ENCODE measurements at regions of chr4 and their contacts with region 1.

Region 1: DNA sequence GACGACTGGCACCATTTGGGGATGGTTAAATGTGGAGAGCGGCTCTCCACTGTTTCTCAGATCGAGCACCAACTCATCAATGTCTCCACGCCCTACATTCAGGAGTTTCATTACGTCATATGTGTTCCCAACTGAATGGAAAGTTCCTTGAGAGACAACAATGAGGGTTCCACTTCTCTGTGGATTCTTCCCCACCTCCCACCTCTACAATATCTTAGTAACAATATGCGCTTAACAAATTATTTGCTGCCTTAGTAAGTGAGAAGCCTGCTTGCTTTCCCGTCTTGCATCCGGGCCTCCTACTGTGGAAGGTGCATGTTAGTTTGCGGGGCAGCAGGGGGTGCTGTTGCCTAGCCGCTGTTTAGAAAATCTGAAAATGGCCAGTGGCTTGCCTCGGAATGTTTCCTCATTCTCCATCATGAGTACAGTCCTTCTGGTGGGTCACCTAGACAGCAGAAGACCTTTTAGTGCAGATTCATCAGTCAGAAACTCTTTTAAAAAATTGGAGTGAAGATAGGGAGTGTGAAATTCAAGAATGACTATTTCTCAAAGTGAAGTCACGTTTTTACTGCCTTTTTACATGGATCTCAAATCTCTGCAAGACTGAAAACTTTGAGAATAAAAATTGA is 55.7 kb downstream of the PHOX2B start:
- DNase-seq: peak; percentile 58
- H3K4me3 ChIP-seq: no peak overlapping the region
- H3K27ac ChIP-seq: no peak overlapping the region
- H3K4me1 ChIP-seq: no peaks in the 10 kb centered on the region
- H3K27me3 ChIP-seq: peaks cover 9 to 10% of the 10 kb centered on the region in 2 experiments
- CTCF ChIP-seq: peak; percentile 83 to 85
- POLR2A ChIP-seq: no peak

Region 2: GRCh38 chr4:41418444-41418843 is 274.4 kb before region 1 on chr4:
- CTCF ChIA-PET with region 1: no interaction called
- POLR2A ChIA-PET with region 1: no interaction called
- dilution Hi-C with region 1: no loop called
- intact Hi-C with region 1: no loop called
- DNase-seq: no peak
- H3K4me3 ChIP-seq: no peak overlapping the region
- H3K27ac ChIP-seq: no peak overlapping the region
- H3K4me1 ChIP-seq: peaks cover 2% of the 10 kb centered on the region
- H3K27me3 ChIP-seq: peaks cover 11 to 12% of the 10 kb centered on the region in 2 experiments
- CTCF ChIP-seq: no peak
- POLR2A ChIP-seq: no peak

Region 3: GRCh38 chr4:41751449-41752061 is 58.7 kb after region 1 on chr4:
- CTCF ChIA-PET with region 1: no interaction called
- POLR2A ChIA-PET with region 1: no interaction called
- dilution Hi-C with region 1: no loop called
- intact Hi-C with region 1: loop called (anchors 5 kb)
- DNase-seq: no peak
- H3K4me3 ChIP-seq: no peak overlapping the region
- H3K27ac ChIP-seq: no peak overlapping the region
- H3K4me1 ChIP-seq: no peaks in the 10 kb centered on the region
- H3K27me3 ChIP-seq: peaks cover 93 to 100% of the 10 kb centered on the region in 2 experiments
- CTCF ChIP-seq: peak; percentile 5 to 15
- POLR2A ChIP-seq: no peak

Region 4: DNA sequence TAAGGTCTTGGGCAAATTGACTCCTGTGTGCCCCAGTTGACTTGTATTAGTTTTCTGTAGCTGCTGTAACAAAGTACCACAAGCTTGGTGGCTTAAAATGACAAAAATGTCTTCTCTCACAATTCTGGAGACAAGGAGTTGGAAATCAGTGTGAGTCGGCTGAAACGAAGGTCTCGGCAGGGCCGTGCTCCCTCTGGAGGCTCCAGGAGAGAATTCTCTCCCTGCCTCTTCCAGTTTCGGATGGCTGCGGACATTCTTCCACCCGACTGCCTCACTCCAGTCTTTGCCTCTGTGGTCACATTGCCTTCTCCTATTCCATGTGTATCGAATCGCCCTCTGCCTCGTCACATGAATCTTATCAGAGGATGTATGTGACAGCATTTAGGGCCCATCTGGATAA is 121.7 kb after region 1 on chr4:
- CTCF ChIA-PET with region 1: no interaction called
- POLR2A ChIA-PET with region 1: no interaction called
- dilution Hi-C with region 1: no loop called
- intact Hi-C with region 1: loop called (anchors 1 kb)
- DNase-seq: peak; percentile 3
- H3K4me3 ChIP-seq: no peak overlapping the region
- H3K27ac ChIP-seq: no peak overlapping the region
- H3K4me1 ChIP-seq: no peaks in the 10 kb centered on the region
- H3K27me3 ChIP-seq: peaks cover 6 to 14% of the 10 kb centered on the region in 2 experiments
- CTCF ChIP-seq: peak in 1 of 2 donors; percentile 49
- POLR2A ChIP-seq: no peak

Region 5: DNA sequence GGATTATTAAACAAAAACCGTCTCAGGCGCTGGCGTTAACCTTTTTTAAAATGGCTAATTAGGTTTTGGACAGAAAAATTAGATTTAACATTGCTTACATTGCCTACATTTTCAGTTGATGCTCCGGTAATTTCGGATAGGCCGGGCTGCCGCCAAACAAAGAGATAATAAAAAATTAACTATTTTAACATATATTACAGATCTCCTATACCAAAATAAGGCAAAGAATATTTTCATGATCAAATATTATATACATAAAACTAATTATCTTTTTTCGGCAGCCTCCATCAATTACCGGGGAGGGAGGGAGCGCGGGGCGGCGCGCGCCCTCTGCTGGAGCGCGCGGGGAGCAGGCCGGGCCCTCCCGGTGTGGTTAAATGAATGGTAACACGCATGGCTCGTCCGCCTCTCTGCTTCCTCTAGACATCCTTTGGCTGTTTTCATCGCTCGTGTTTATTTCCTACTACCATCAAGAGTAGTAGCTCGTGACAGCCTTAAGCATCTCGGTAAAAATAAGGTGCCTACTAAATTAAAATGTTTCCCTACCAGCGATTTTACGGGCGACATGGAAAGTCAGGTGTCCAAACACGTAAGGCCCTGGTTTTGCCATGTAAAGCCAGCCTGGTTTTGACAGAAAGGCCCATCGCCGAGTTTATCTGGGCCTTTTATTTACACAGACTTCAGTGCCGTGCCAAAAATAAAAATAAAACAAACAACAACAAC is 190.0 kb after region 1 on chr4:
- CTCF ChIA-PET with region 1: interaction called, 71 read pairs
- POLR2A ChIA-PET with region 1: no interaction called
- dilution Hi-C with region 1: no loop called
- intact Hi-C with region 1: loop called (anchors 1 kb)
- DNase-seq: peak; percentile 35
- H3K4me3 ChIP-seq: no peak overlapping the region
- H3K27ac ChIP-seq: no peak overlapping the region
- H3K4me1 ChIP-seq: peaks cover 6% of the 10 kb centered on the region
- H3K27me3 ChIP-seq: peaks cover 51 to 90% of the 10 kb centered on the region in 2 experiments
- CTCF ChIP-seq: peak; percentile 89 to 90
- POLR2A ChIP-seq: no peak

Region 6: GRCh38 chr4:41887821-41888686 is 195.2 kb after region 1 on chr4:
- CTCF ChIA-PET with region 1: interaction called, 71 read pairs
- POLR2A ChIA-PET with region 1: no interaction called
- dilution Hi-C with region 1: no loop called
- intact Hi-C with region 1: loop called (anchors 1 kb)
- DNase-seq: peak; percentile 55
- H3K4me3 ChIP-seq: no peak overlapping the region
- H3K27ac ChIP-seq: no peak overlapping the region
- H3K4me1 ChIP-seq: no peaks in the 10 kb centered on the region
- H3K27me3 ChIP-seq: peaks cover 32 to 69% of the 10 kb centered on the region in 2 experiments
- CTCF ChIP-seq: peak; percentile 58
- POLR2A ChIP-seq: no peak

Region 7: GRCh38 chr4:41963105-41963504 is 270.3 kb after region 1 on chr4:
- CTCF ChIA-PET with region 1: no interaction called
- POLR2A ChIA-PET with region 1: no interaction called
- dilution Hi-C with region 1: no loop called
- intact Hi-C with region 1: loop called (anchors 1 kb)
- DNase-seq: peak; percentile 26
- H3K4me3 ChIP-seq: no peak overlapping the region
- H3K27ac ChIP-seq: no peak overlapping the region
- H3K4me1 ChIP-seq: no peaks in the 10 kb centered on the region
- H3K27me3 ChIP-seq: no peaks in the 10 kb centered on the region
- CTCF ChIP-seq: peak in 1 of 2 donors; percentile 29
- POLR2A ChIP-seq: no peak

Region 8: DNA sequence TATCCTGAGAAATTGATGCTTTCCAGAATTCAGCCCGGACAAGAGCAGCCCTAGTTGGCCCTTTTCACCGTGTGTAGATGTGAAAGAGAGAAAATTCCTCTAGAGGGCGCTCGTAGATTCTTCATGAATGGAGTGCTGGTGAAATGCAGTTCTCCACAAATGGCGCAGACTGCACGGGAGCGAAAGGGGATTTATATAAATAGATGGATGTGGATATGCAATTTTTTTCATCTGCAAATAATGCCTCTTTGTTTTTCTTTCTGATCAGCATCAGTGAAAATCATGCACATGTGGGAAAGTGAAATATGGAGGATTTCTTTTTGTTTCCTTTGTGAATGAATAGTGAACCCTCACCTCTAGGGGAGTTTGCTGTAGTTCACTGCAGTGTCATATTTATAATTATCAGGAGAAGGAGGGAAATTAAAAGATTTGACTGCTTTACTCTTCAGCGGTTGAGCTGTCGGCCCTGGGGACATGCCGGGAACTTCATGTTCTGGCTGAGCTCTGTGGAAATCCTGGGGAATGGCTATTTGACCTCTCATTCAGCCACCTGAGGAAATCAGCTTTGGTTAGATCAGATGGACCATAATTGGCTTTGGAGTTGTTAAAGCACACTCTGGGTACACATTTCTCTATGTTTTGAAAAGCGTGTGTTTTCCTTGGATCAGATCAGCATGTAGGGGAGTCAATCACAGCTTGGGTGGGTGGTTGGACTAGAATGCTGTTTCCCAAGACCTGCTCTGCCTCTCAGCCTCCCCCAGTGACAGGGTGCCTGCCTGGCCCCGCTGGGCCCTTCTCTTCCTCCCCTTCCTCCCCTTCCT is 589.5 kb after region 1 on chr4:
- CTCF ChIA-PET with region 1: no interaction called
- POLR2A ChIA-PET with region 1: no interaction called
- dilution Hi-C with region 1: no loop called
- intact Hi-C with region 1: loop called (anchors 1 kb)
- DNase-seq: peak; percentile 71
- H3K4me3 ChIP-seq: no peak overlapping the region
- H3K27ac ChIP-seq: no peak overlapping the region
- H3K4me1 ChIP-seq: peaks cover 3% of the 10 kb centered on the region
- H3K27me3 ChIP-seq: peaks cover 0 to 4% of the 10 kb centered on the region in 2 experiments
- CTCF ChIP-seq: peak; percentile 56 to 71
- POLR2A ChIP-seq: no peak

Measured in endothelial cell of umbilical vein (primary cell).